Panc1 (cell line): ENCODE measurements at regions of chr14 and their contacts with region 1.

Region 1: DNA sequence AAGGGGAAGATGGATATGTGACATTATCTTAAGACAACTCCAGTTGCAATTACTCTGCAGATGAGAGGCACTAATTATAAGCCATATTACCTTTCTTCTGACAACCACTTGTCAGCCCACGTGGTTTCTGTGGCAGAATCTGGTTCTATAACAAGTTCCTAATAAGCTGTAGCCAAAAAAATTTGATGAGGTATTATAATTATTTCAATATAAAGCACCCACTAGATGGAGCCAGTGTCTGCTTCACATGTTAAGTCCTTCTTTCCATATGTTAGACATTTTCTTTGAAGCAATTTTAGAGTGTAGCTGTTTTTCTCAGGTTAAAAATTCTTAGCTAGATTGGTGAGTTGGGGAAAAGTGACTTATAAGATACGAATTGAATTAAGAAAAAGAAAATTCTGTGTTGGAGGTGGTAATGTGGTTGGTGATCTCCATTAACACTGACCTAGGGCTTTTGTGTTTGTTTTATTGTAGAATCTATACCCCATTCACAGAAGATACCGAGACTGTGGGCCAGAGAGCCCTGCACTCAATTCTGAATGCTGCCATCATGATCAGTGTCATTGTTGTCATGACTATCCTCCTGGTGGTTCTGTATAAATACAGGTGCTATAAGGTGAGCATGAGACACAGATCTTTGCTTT is 36.9 kb downstream of the PSEN1 start:
- DNase-seq: no peak
- ATAC-seq: no peak
- H3K4me3 ChIP-seq: no peak overlapping the region
- H3K27ac ChIP-seq: no peak overlapping the region
- H3K4me1 ChIP-seq: no peaks in the 10 kb centered on the region
- H3K27me3 ChIP-seq: no peaks in the 10 kb centered on the region
- CTCF ChIP-seq: peak; percentile 62; the same call in 1 of the 2 replicates

Region 2: DNA sequence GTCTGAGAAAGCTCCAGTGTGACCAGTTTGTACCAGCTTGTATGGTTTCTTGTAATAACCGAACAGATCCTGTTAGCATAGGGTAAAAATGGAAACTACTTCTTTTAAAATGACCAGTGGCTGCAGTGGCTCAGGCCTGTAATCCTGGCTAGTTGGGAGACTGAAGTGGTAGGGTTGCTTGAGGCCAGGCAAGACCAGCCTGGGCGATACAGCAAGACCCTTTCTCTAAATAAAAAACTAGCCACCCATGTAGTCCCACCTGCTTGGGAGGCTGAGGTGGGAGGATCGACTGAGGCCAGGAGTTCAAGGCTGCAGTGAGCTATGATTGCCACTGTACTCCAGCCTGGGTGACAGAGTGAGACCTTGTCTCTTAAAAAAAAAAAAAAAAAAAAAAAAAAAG is 29.6 kb before region 1 on chr14:
- CTCF ChIA-PET with region 1: interaction called, 12 read pairs
- POLR2A ChIA-PET with region 1: interaction called, 3 read pairs
- in situ Hi-C with region 1: no loop called
- intact Hi-C with region 1: no loop called
- DNase-seq: no peak
- ATAC-seq: no peak
- H3K4me3 ChIP-seq: no peak overlapping the region
- H3K27ac ChIP-seq: no peak overlapping the region
- H3K4me1 ChIP-seq: no peaks in the 10 kb centered on the region; the same call in 1 of the 2 replicates
- H3K27me3 ChIP-seq: no peaks in the 10 kb centered on the region
- CTCF ChIP-seq: no peak

Region 3: GRCh38 chr14:73269729-73270531 is 96.7 kb after region 1 on chr14:
- CTCF ChIA-PET with region 1: no interaction called
- POLR2A ChIA-PET with region 1: no interaction called
- in situ Hi-C with region 1: no loop called
- intact Hi-C with region 1: loop called (anchors 10 kb)
- DNase-seq: no peak
- ATAC-seq: no peak
- H3K4me3 ChIP-seq: no peak overlapping the region
- H3K27ac ChIP-seq: no peak overlapping the region
- H3K4me1 ChIP-seq: no peaks in the 10 kb centered on the region
- H3K27me3 ChIP-seq: no peaks in the 10 kb centered on the region
- CTCF ChIP-seq: no peak